HepG2 (cell line): ENCODE measurements at regions of chr18 and their contacts with region 1.

Region 1: GRCh38 chr18:6401687-6402086 is 13.0 kb downstream of the L3MBTL4 start:
- DNase-seq: no peak
- ATAC-seq: no peak
- H3K4me3 ChIP-seq: no peak overlapping the region
- H3K27ac ChIP-seq: no peak overlapping the region
- H3K4me1 ChIP-seq: peaks cover 49% of the 10 kb centered on the region
- H3K27me3 ChIP-seq: no peaks in the 10 kb centered on the region; a peak in 1 of 5 replicates
- CTCF ChIP-seq: peak; percentile 55
- EP300 ChIP-seq: no peak
- POLR2A ChIP-seq: no peak
- RAD21 ChIP-seq: no peak

Region 2: DNA sequence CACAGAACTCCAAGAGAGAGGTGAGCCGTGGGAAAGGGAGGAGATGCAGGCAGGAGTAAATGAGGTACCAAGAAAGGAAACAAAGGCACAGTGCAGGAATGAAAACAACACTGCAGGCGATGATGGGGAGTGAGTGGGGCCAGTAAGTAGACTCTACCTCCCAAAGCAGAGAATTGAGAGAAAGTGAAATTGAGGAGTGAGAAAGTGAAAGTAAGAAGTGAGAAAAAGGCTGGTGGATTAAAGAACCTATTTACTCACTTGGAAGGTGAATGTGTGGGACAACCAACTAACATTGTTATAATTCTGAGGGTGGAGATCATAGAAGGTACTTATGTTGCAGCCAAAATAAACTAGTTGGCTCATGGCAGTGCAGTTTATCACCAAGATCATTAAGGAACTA is 313.3 kb before region 1 on chr18:
- CTCF ChIA-PET with region 1: no interaction called
- POLR2A ChIA-PET with region 1: no interaction called
- in situ Hi-C with region 1: no loop called
- intact Hi-C with region 1: no loop called
- DNase-seq: no peak
- ATAC-seq: no peak
- H3K4me3 ChIP-seq: no peak overlapping the region
- H3K27ac ChIP-seq: no peak overlapping the region
- H3K4me1 ChIP-seq: no peaks in the 10 kb centered on the region
- H3K27me3 ChIP-seq: no peaks in the 10 kb centered on the region
- CTCF ChIP-seq: no peak
- EP300 ChIP-seq: no peak
- POLR2A ChIP-seq: no peak
- RAD21 ChIP-seq: no peak

Region 3: GRCh38 chr18:6219116-6219717 is 182.5 kb before region 1 on chr18:
- CTCF ChIA-PET with region 1: no interaction called
- POLR2A ChIA-PET with region 1: no interaction called
- in situ Hi-C with region 1: no loop called
- intact Hi-C with region 1: loop called (anchors 10 kb)
- DNase-seq: peak; percentile 24
- ATAC-seq: peak; percentile 80
- H3K4me3 ChIP-seq: no peak overlapping the region
- H3K27ac ChIP-seq: no peak overlapping the region
- H3K4me1 ChIP-seq: no peaks in the 10 kb centered on the region
- H3K27me3 ChIP-seq: no peaks in the 10 kb centered on the region
- CTCF ChIP-seq: peak; percentile 77
- EP300 ChIP-seq: no peak
- POLR2A ChIP-seq: no peak
- RAD21 ChIP-seq: no peak

Region 4: GRCh38 chr18:6370886-6371635 is 30.6 kb before region 1 on chr18:
- CTCF ChIA-PET with region 1: no interaction called
- POLR2A ChIA-PET with region 1: interaction called, 3 read pairs
- in situ Hi-C with region 1: no loop called
- intact Hi-C with region 1: loop called (anchors 2 kb)
- DNase-seq: peak; percentile 86
- ATAC-seq: peak; percentile 74
- H3K4me3 ChIP-seq: peak overlapping the region; percentile 39 to 68 (median 53)
- H3K27ac ChIP-seq: peak overlapping the region; percentile 78
- H3K4me1 ChIP-seq: peaks cover 96% of the 10 kb centered on the region
- H3K27me3 ChIP-seq: no peaks in the 10 kb centered on the region
- CTCF ChIP-seq: peak; percentile 25; the same call in 1 of the 2 replicates
- EP300 ChIP-seq: peak in 1 of 2 experiments; percentile 86; a peak in 2 of 4 replicates
- POLR2A ChIP-seq: no peak
- RAD21 ChIP-seq: no peak

Region 5: GRCh38 chr18:6414118-6414722 is 12.5 kb after region 1 on chr18:
- CTCF ChIA-PET with region 1: no interaction called
- POLR2A ChIA-PET with region 1: interaction called, 18 read pairs
- in situ Hi-C with region 1: no loop called
- intact Hi-C with region 1: no loop called
- DNase-seq: peak; percentile 22
- ATAC-seq: peak; percentile 89
- H3K4me3 ChIP-seq: peak overlapping the region; percentile 85 to 98 (median 91)
- H3K27ac ChIP-seq: peak overlapping the region; percentile 79
- H3K4me1 ChIP-seq: peaks cover 42% of the 10 kb centered on the region
- H3K27me3 ChIP-seq: no peaks in the 10 kb centered on the region; a peak in 1 of 5 replicates
- CTCF ChIP-seq: peak; percentile 23; the same call in 1 of the 2 replicates
- EP300 ChIP-seq: no peak
- POLR2A ChIP-seq: no peak; a peak in 1 of 4 replicates
- RAD21 ChIP-seq: no peak

Region 6: DNA sequence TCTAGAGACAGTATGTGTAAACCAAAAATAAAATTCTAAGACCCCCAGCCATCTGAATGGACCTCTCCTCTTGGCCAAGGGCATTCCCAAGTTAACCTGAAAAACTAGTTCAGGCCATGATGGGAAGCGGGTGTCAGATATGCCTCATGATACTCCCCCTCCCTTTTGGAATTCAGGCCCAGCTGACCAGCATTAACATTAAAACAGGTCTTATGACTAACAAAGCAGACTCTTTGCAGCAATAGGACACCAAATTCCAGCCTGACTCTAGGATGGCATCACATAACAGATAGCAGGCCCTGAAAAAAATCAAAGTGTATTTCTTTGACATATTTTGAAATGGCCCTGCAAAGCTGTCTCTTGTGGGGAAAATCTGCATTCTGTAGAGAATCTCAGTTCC is 86.3 kb after region 1 on chr18:
- CTCF ChIA-PET with region 1: no interaction called
- POLR2A ChIA-PET with region 1: no interaction called
- in situ Hi-C with region 1: no loop called
- intact Hi-C with region 1: no loop called
- DNase-seq: no peak
- ATAC-seq: no peak
- H3K4me3 ChIP-seq: no peak overlapping the region
- H3K27ac ChIP-seq: no peak overlapping the region
- H3K4me1 ChIP-seq: peaks cover 15% of the 10 kb centered on the region
- H3K27me3 ChIP-seq: peaks cover 1 to 3% of the 10 kb centered on the region in 2 experiments; a peak in 3 of 5 replicates
- CTCF ChIP-seq: no peak
- EP300 ChIP-seq: no peak
- POLR2A ChIP-seq: no peak
- RAD21 ChIP-seq: no peak

Region 7: DNA sequence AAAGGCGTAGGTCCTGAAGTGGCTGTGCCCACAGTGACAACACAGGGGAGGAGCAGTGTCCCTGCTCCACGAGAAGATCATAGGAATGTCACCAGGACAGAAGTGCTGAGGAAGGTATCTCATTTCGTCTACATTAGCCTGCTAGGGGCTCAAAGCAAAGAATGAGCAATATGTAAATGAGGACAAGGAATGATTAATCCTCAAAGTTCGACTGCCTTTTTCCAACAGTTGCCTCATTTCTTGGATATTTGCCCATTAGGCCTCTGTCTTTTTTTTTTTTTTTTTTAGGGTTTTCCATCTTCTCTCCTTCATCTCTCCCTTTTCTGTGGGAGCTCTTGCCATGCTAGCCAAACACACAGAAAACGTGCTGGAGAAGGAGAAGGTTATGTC is 222.6 kb after region 1 on chr18:
- CTCF ChIA-PET with region 1: no interaction called
- POLR2A ChIA-PET with region 1: no interaction called
- in situ Hi-C with region 1: no loop called
- intact Hi-C with region 1: no loop called
- DNase-seq: no peak
- ATAC-seq: no peak
- H3K4me3 ChIP-seq: no peak overlapping the region
- H3K27ac ChIP-seq: no peak overlapping the region
- H3K4me1 ChIP-seq: no peaks in the 10 kb centered on the region
- H3K27me3 ChIP-seq: peaks cover 0 to 9% of the 10 kb centered on the region in 2 experiments; a peak in 2 of 5 replicates
- CTCF ChIP-seq: no peak
- EP300 ChIP-seq: no peak
- POLR2A ChIP-seq: no peak
- RAD21 ChIP-seq: no peak